Activated CD8-positive, alpha-beta T cell treated with anti-CD3 and anti-CD28 coated beads, Interleukin-2, amount 10 ng/mL, durations not matched to agents 7 days and 5 days (primary cell): ENCODE measurements at regions of chr3 and their contacts with region 1.

Region 1: GRCh38 chr3:187738331-187739093 is 6.8 kb downstream of the BCL6 start:
- DNase-seq: peak; percentile 84
- ATAC-seq: peak; percentile 24
- H3K4me3 Mint-ChIP-seq: peak overlapping the region; percentile 100
- H3K27ac Mint-ChIP-seq: peak overlapping the region; percentile 100
- H3K4me1 Mint-ChIP-seq: peaks cover 53% of the 10 kb centered on the region
- H3K27me3 Mint-ChIP-seq: no peaks in the 10 kb centered on the region

Region 2: DNA sequence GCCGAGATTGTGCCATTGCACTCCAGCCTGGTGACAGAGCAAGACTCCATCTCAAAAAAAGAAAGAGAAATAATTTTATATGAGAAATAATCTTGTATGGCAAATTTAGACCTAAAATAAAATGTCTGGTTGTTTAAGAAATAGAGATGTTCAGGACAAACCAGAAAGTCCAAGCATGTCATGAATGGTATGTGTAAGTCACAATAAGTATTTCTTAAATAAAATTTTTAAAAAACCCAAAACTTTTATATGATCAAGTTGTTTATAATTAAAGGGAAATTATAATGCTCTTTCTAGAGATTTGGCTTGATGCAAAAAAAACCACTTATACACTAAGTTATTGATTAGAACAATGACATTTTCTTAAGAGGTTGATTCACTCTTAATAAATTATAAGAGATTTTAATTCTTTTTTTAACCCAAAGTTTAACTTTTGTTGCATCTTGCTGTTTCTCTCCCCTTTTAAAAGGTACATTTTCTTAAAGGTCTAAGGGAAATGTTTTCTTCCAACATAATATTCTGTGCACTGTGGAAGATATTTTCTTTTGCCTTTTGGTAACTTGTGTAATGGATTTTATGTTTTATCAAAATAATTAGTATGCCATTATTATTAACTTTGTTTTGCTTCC is 264.6 kb before region 1 on chr3:
- CTCF ChIA-PET with region 1: no interaction called
- POLR2A ChIA-PET with region 1: no interaction called
- DNase-seq: no peak
- ATAC-seq: no peak
- H3K4me3 Mint-ChIP-seq: no peak overlapping the region
- H3K27ac Mint-ChIP-seq: no peak overlapping the region
- H3K4me1 Mint-ChIP-seq: no peaks in the 10 kb centered on the region
- H3K27me3 Mint-ChIP-seq: no peaks in the 10 kb centered on the region

Region 3: DNA sequence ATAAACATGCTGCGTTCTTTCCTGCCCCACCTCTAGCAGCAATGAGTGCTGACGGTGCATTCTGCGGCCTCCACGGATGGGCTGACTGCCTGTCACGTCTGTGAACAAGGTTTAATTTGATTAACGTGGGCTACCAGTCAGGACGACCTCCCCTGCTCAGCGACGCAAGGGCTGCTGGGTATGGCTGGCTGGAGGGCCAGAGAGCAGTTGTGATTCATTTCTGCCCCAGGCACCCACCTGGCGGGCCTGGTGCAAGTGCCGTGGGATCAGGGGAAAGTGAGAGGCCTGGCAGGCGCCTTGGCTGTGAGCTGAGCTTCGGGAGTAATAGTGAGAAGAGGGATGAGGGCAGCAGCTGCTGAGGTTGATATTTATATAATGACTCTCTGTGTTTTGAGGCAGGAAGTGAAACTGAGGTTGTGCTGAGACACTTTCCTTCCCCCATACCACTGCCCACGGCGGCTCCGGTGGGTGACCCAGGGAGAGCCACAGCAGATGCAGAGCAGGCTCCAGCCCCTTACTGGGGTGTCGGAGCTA is 197.2 kb after region 1 on chr3:
- CTCF ChIA-PET with region 1: interaction called, 16 read pairs
- POLR2A ChIA-PET with region 1: no interaction called
- DNase-seq: peak; percentile 68
- ATAC-seq: peak; percentile 84
- H3K4me3 Mint-ChIP-seq: peak overlapping the region; percentile 23
- H3K27ac Mint-ChIP-seq: peak overlapping the region; percentile 83
- H3K4me1 Mint-ChIP-seq: peaks cover 34% of the 10 kb centered on the region
- H3K27me3 Mint-ChIP-seq: peaks cover 14% of the 10 kb centered on the region

Region 4: DNA sequence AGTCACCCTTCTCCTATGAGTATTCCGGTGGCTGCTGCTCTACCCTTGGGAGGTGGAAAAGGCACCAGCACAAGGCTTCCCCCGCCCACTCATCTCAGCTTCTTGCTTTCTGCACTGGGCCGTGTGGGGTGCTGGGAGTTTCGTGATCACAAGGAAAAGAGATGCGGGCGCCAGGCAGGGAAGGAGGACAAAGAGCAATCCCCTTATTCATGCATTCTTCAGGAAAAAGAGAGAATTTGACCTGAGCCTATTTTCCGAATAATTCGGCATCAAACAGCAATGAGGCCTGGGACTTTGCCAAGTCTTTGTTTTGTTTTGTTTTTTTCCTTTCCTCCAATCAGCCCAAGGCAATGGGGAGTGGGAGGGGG is 313.3 kb after region 1 on chr3:
- CTCF ChIA-PET with region 1: interaction called, 17 read pairs
- POLR2A ChIA-PET with region 1: interaction called, 5 read pairs
- DNase-seq: no peak
- ATAC-seq: no peak
- H3K4me3 Mint-ChIP-seq: no peak overlapping the region
- H3K27ac Mint-ChIP-seq: no peak overlapping the region
- H3K4me1 Mint-ChIP-seq: peaks cover 44% of the 10 kb centered on the region
- H3K27me3 Mint-ChIP-seq: no peaks in the 10 kb centered on the region

Region 5: DNA sequence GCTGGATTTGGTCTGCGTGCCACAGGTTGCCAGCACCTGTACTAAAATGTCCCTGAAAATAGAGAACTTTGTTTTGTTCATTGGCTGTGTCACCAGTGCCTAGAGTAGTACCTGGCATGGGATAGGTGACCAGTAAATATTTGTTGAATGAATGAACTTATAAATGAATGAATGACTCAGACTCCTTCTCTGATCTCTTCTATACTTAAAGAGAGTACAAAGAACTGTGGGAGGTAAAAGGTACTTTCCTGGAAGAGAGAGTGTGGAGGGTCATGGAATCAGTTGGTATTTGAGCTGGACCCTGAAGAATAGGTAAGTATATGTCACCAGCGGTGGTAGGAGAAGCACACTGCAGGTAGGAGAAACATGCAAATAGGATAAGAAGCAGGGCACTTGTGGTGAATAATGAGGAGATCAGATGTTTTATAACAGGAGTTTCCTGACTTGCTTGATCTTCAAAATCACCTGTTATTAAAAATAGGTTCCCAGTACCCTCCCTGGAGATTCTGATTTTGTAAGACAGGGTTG is 564.8 kb after region 1 on chr3:
- CTCF ChIA-PET with region 1: interaction called, 29 read pairs
- POLR2A ChIA-PET with region 1: interaction called, 5 read pairs
- DNase-seq: no peak
- ATAC-seq: no peak
- H3K4me3 Mint-ChIP-seq: no peak overlapping the region
- H3K27ac Mint-ChIP-seq: no peak overlapping the region
- H3K4me1 Mint-ChIP-seq: peaks cover 25% of the 10 kb centered on the region
- H3K27me3 Mint-ChIP-seq: no peaks in the 10 kb centered on the region

Region 6: GRCh38 chr3:188432802-188433520 is 694.4 kb after region 1 on chr3:
- CTCF ChIA-PET with region 1: interaction called, 11 read pairs
- POLR2A ChIA-PET with region 1: no interaction called
- DNase-seq: no peak
- ATAC-seq: peak; percentile 73
- H3K4me3 Mint-ChIP-seq: peak overlapping the region; percentile 51
- H3K27ac Mint-ChIP-seq: peak overlapping the region; percentile 86
- H3K4me1 Mint-ChIP-seq: peaks cover 38% of the 10 kb centered on the region
- H3K27me3 Mint-ChIP-seq: no peaks in the 10 kb centered on the region

Region 7: DNA sequence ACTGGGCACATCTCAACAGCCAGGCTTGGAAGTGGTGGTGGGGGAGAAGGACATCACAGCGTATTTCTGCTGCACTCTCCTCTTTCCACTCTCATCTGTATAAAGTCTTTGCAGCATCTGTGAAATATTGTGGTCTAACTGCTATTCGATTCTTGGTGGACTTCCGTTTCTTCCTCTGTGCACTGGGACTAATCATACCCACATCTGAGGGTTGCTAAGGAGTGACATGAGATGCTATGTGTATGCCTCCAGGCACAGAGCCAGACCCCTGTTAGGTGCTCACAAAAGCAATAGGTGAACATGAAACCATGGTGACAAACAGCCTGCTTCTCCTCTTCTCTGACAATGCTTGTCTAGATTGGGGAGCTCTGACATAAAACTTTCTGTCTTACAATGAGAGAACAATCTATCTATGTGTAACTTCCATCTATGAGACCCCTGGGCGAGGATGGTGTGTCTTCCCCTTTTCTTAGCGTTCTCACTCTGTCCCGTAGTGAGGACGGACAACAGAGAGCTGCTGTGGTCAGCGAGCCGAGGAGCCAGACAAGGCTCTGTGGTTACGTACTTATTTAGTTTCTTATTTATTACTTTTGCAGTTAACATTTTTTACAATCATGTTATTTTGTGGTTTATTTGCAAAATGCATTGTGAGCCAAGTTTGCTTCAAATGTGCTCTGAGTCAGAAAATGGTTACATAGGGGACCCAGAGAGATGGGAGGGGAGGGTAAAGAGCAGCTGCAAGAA is 1236.5 kb after region 1 on chr3:
- CTCF ChIA-PET with region 1: interaction called, 15 read pairs
- POLR2A ChIA-PET with region 1: no interaction called
- DNase-seq: peak; percentile 55
- ATAC-seq: peak; percentile 96
- H3K4me3 Mint-ChIP-seq: no peak overlapping the region
- H3K27ac Mint-ChIP-seq: peak overlapping the region; percentile 11
- H3K4me1 Mint-ChIP-seq: peaks cover 37% of the 10 kb centered on the region
- H3K27me3 Mint-ChIP-seq: peaks cover 7% of the 10 kb centered on the region